ENCODE measurements at regions of chr12 and their contacts with region 1.

Region 1: DNA sequence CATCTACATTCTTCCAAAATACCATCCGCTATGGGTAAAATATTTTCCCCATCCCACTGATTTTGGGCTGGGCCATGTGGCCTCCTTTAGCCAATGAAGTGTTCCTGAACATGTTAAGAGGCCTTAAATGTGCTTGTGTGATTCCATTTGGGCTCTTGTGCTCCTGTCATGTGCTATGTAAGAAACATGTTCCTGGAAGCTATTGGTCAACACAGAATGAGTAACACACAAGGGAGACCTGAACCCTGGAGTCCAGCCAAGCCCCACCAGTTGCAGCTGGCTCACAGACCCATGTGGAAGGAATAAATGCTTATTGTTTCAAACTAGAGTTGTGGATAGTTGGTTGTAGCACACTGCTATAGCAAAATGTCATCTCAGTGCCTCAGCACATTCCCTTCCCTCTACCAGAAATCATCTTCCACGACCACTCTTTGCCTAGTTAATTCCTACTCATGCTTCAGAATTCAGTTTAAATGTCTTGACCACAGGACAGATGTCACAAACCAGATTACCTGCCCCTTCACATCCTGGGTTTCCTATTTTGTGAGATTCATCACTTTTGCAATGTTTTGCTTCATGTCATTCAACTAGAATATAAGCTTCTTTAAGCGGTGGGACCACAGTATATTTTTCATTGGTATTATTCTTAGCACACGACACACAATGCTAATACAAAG is 217.3 kb upstream of the EEA1 start:
- DNase-seq: peak; percentile 59
- H3K4me3 Mint-ChIP-seq: no peak overlapping the region
- H3K27ac Mint-ChIP-seq: no peak overlapping the region
- H3K4me1 Mint-ChIP-seq: peaks cover 19% of the 10 kb centered on the region
- H3K27me3 Mint-ChIP-seq: no peaks in the 10 kb centered on the region
- CTCF ChIP-seq: no peak

Region 2: DNA sequence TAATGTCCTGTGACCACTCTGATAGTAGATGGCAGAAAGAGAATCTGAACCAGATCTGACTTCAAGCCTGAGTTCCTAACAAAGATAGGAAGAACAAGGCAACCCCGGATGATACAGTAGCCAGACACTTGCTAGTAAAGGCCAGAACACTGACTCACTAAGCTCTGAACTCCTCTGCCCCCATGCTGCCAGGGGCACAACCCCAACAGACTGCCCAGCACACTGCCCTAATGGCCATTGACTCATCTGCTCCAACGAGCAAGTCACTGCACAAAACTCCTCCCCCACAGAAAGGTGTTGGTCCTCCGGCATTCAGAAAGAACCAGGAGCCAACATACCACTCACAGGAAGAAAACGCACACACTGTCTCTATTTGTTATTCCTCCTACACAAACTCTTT is 51.7 kb after region 1 on chr12:
- CTCF ChIA-PET with region 1: no interaction called
- intact Hi-C with region 1: loop called (anchors 5 kb)
- DNase-seq: peak; percentile 50
- H3K4me3 Mint-ChIP-seq: no peak overlapping the region
- H3K27ac Mint-ChIP-seq: peak overlapping the region; percentile 23
- H3K4me1 Mint-ChIP-seq: peaks cover 38% of the 10 kb centered on the region
- H3K27me3 Mint-ChIP-seq: no peaks in the 10 kb centered on the region
- CTCF ChIP-seq: no peak

Region 3: DNA sequence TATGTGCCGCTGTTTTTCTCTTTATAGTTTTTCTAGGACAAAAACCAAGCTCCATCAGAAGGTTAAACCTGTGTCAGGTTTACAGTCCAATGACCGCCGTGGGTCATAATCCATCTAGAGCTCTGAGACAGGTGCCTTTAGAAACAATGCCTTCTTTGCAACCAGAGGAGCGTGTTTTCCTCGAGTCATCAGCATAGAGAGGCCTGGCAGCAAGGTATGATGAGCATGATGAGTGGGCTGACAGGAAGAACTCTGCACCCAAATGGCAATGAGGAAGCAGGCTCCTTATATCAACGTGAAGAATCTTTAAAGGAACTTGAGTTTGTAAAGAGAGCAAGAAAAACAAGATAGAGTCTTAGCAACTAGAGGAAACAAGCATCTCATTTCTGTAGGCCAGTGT is 170.8 kb after region 1 on chr12:
- CTCF ChIA-PET with region 1: no interaction called
- intact Hi-C with region 1: loop called (anchors 5 kb)
- DNase-seq: peak; percentile 14
- H3K4me3 Mint-ChIP-seq: no peak overlapping the region
- H3K27ac Mint-ChIP-seq: peak overlapping the region; percentile 50
- H3K4me1 Mint-ChIP-seq: peaks cover 64% of the 10 kb centered on the region
- H3K27me3 Mint-ChIP-seq: no peaks in the 10 kb centered on the region
- CTCF ChIP-seq: no peak